Breast epithelium (tissue), 4 donors: ENCODE measurements at regions of chr19 and their contacts with region 1.

Region 1: DNA sequence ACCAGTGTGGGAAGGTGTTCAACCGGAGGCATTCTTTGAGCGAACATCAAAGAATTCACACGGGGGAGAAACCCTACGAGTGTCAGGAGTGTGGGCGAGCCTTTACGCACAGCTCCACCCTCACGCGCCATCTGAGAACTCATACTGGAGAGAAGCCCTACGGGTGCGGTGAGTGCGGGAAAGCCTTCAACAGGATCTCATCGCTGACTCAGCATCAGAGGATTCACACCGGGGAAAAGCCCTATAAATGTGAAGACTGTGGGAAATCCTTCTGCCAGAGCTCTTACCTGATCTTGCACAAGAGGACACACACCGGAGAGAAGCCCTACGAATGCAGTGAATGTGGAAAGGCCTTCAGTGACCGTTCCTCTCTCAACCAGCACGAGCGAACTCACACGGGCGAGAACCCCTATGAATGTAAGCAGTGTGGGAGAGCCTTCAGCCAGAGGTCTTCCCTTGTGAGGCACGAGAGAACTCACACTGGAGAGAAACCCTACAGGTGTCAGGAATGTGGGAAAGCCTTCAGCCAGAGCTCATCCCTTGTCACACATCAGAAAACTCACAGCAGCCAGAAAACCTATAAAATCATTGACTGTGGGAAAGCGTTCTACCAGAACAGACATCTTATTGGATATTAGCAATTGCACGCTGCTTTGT is 6.9 kb upstream of the ZNF555 start:
- DNase-seq: no peak
- H3K4me3 ChIP-seq: no peak overlapping the region
- H3K27ac ChIP-seq: no peak overlapping the region
- H3K4me1 ChIP-seq: no peaks in the 10 kb centered on the region
- H3K27me3 ChIP-seq: no peaks in the 10 kb centered on the region
- CTCF ChIP-seq: no peak
- POLR2A ChIP-seq: no peak

Region 2: GRCh38 chr19:2246801-2247361 is 587.5 kb before region 1 on chr19:
- intact Hi-C with region 1: loop called (anchors 5 kb)
- DNase-seq: no peak
- H3K4me3 ChIP-seq: no peak overlapping the region
- H3K27ac ChIP-seq: no peak overlapping the region
- H3K4me1 ChIP-seq: peaks cover 6 to 17% of the 10 kb centered on the region in 2 donors
- H3K27me3 ChIP-seq: peaks cover 3 to 28% of the 10 kb centered on the region in 2 donors
- CTCF ChIP-seq: no peak
- POLR2A ChIP-seq: no peak

Region 3: GRCh38 chr19:2869618-2870017 is 35.3 kb after region 1 on chr19:
- intact Hi-C with region 1: no loop called
- DNase-seq: no peak
- H3K4me3 ChIP-seq: no peak overlapping the region
- H3K27ac ChIP-seq: no peak overlapping the region
- H3K4me1 ChIP-seq: no peaks in the 10 kb centered on the region
- H3K27me3 ChIP-seq: no peaks in the 10 kb centered on the region
- CTCF ChIP-seq: no peak
- POLR2A ChIP-seq: no peak

Region 4: DNA sequence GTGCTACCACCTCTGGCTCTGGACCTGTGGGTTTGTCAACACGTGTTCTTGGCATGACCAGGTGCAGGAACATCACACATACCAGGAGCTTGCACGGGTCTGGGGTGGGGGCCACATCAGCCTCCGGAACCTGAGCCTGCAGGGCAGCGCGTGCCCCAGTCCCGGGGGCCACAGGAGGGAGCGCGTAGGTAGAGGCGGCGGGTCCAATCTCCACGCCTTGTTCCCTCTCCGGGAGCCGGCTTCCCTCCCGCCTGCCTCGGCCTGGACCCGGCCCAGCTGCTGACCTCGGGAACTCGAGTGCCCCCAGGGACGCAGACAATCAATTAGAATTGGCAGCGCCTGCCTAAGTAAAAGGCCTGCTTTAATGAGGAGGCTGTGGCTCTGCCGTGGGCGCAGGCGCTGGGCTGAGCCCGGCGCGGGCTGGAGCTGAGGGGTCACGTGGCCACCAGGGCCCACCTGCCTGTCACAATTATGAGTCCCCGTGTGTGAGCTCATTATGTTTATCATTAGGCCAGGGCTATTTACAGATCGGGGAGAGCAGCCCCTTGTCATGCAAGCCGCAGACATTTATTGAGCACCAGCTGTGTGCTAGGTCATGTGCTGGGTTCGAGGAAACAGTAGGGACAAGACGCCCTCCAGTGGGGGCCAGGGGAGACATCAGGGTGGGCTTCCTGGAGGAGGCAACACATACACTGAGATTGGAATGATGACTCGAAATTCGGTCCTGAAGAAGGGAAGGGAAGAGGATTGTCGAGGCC is 1772.8 kb after region 1 on chr19:
- intact Hi-C with region 1: loop called (anchors 5 kb)
- DNase-seq: no peak
- H3K4me3 ChIP-seq: peak overlapping the region in 1 of 3 donors; percentile 45
- H3K27ac ChIP-seq: no peak overlapping the region
- H3K4me1 ChIP-seq: no peaks in the 10 kb centered on the region
- H3K27me3 ChIP-seq: no peaks in the 10 kb centered on the region
- CTCF ChIP-seq: no peak
- POLR2A ChIP-seq: no peak